Cardiac septum (tissue), 1 donor: ENCODE measurements at regions of chr4 and their contacts with region 1.

Region 1: DNA sequence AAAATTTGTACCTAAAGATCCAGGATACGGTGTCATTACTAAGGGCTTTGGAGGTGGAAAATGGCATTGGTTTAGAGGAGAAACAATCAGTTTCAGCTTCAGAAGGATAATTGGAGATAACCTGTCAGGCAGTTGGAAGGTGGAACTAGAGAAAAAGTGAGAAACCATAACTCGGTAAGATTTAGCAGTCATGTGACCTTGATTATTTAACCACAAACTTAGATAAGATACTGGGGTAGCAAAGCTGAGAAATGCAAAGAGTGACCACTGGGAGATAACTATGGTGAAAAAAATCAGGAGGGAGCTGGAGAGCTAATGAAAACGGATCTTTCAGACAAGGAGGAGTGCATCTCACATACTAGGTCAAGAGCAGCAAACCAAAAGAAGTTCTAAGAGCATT is 58.3 kb upstream of the SMARCA5 start:
- DNase-seq: no peak

Region 2: DNA sequence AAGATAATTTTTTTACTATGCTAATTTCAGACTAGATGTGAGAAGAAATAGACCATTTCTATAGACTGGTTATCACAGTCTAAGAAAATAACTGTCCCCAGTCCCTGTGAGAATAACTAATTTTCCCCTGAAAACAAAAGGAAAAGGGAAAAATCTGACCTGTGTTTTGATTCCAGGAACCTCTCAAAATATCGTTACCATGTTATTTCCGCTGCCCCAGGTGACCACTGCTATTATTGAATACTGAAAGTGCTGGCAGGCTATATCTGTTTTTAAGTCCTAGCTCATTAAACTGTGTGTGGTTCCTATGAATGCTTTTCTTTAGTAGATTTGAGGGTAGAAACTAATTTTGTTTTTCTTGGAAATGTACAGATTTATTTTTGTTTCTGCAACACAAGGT is 35.0 kb before region 1 on chr4:
- intact Hi-C with region 1: loop called (anchors 5 kb)
- DNase-seq: no peak

Region 3: GRCh38 chr4:143441678-143442077 is 13.5 kb before region 1 on chr4:
- intact Hi-C with region 1: no loop called
- DNase-seq: no peak